ENCODE measurements at regions of chr13 and their contacts with region 1.

Region 1: DNA sequence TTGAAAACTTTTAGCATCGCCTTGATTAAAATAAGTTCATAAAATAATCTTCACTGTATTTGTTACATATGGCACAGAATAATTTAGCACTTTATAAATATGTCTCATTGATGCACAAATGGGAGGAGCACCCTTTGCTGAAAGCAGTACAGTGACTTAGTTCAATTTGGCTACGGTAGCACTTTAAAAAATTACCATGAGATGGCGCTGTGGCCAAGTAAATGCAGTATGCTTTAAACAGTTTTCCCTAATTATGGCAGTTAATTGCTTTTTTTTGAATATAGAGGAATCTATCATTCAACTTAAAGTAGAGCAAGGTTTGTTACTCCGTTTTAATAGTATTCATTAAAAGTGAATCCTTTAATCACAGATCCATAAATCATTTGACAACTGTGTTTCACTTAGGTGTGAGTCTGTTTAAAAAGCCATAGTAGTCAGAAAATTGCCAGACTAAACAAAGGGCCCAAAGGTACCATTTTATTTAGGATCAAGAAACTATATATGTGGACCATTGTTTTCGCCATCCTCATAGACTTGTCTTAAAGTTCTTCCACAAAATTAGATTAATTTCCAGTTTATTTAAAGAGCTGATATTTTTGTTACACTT is 34.7 kb upstream of the ESD start:
- DNase-seq: peak; percentile 60
- H3K4me3 ChIP-seq: no peak overlapping the region
- H3K27ac ChIP-seq: no peak overlapping the region
- H3K4me1 ChIP-seq: no peaks in the 10 kb centered on the region
- H3K27me3 ChIP-seq: peaks cover 0 to 6% of the 10 kb centered on the region in 2 experiments
- CTCF ChIP-seq: peak; percentile 39 to 51
- POLR2A ChIP-seq: no peak

Region 2: GRCh38 chr13:46905247-46905646 is 73.6 kb after region 1 on chr13:
- CTCF ChIA-PET with region 1: no interaction called
- POLR2A ChIA-PET with region 1: no interaction called
- dilution Hi-C with region 1: no loop called
- intact Hi-C with region 1: no loop called
- DNase-seq: no peak
- H3K4me3 ChIP-seq: no peak overlapping the region
- H3K27ac ChIP-seq: no peak overlapping the region
- H3K4me1 ChIP-seq: no peaks in the 10 kb centered on the region
- H3K27me3 ChIP-seq: no peaks in the 10 kb centered on the region
- CTCF ChIP-seq: no peak
- POLR2A ChIP-seq: no peak

Region 3: DNA sequence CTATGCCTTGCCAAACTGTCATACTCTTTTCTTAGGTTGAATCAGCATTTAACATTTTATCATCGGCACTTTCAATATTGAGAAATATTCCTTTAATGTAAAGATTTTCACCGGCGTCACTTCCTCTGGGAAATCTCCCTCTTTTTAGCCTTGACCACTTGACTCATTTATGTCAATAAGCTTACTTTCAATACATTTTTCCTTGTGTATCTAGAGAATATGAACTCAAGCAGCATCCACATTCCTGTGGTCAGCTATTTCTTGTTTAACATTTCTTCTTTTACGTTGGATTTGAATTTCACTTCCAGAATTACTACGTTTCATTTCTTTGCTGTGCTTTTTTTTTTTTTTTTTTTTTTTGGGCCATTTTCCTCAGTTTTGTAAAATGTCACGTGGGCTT is 336.4 kb after region 1 on chr13:
- CTCF ChIA-PET with region 1: no interaction called
- POLR2A ChIA-PET with region 1: no interaction called
- dilution Hi-C with region 1: no loop called
- intact Hi-C with region 1: no loop called
- DNase-seq: no peak
- H3K4me3 ChIP-seq: no peak overlapping the region
- H3K27ac ChIP-seq: no peak overlapping the region
- H3K4me1 ChIP-seq: no peaks in the 10 kb centered on the region
- H3K27me3 ChIP-seq: no peaks in the 10 kb centered on the region
- CTCF ChIP-seq: no peak
- POLR2A ChIP-seq: no peak

Region 4: DNA sequence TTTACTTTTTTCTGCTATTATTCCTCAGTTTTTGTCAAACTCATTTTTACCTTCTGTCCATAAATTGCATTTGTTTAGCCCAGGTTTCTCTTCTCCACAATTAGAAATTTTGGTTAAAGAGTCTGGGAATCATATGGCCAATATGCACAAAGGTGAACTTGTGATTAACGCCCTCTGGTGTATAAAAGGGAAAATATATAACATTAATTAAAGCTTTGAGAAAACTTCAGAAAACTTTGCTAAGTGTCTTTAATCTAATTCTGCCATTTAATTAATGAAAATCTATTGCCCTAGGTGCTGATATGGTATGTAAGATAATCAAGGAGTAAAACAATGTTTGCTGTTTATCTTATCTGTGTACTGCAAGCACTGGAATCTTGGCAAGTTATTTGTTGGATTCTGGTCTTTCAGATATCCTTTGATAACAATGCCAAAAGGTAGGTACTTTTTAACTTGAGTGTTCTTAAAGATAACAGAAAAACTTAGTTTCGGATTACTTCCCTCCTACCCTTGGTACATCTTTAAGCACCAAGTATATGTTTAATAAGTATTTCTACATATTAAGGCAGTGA is 766.7 kb after region 1 on chr13:
- CTCF ChIA-PET with region 1: no interaction called
- POLR2A ChIA-PET with region 1: no interaction called
- dilution Hi-C with region 1: no loop called
- intact Hi-C with region 1: loop called (anchors 5 kb)
- DNase-seq: no peak
- H3K4me3 ChIP-seq: no peak overlapping the region
- H3K27ac ChIP-seq: no peak overlapping the region
- H3K4me1 ChIP-seq: no peaks in the 10 kb centered on the region
- H3K27me3 ChIP-seq: no peaks in the 10 kb centered on the region
- CTCF ChIP-seq: no peak
- POLR2A ChIP-seq: no peak

Region 5: GRCh38 chr13:47774671-47774994 is 942.9 kb after region 1 on chr13:
- CTCF ChIA-PET with region 1: interaction called, 27 read pairs
- POLR2A ChIA-PET with region 1: no interaction called
- dilution Hi-C with region 1: no loop called
- intact Hi-C with region 1: loop called (anchors 1 kb)
- DNase-seq: no peak
- H3K4me3 ChIP-seq: no peak overlapping the region
- H3K27ac ChIP-seq: no peak overlapping the region
- H3K4me1 ChIP-seq: no peaks in the 10 kb centered on the region
- H3K27me3 ChIP-seq: no peaks in the 10 kb centered on the region
- CTCF ChIP-seq: no peak
- POLR2A ChIP-seq: no peak